ENCODE measurements at regions of chr11 and their contacts with region 1.

Region 1: DNA sequence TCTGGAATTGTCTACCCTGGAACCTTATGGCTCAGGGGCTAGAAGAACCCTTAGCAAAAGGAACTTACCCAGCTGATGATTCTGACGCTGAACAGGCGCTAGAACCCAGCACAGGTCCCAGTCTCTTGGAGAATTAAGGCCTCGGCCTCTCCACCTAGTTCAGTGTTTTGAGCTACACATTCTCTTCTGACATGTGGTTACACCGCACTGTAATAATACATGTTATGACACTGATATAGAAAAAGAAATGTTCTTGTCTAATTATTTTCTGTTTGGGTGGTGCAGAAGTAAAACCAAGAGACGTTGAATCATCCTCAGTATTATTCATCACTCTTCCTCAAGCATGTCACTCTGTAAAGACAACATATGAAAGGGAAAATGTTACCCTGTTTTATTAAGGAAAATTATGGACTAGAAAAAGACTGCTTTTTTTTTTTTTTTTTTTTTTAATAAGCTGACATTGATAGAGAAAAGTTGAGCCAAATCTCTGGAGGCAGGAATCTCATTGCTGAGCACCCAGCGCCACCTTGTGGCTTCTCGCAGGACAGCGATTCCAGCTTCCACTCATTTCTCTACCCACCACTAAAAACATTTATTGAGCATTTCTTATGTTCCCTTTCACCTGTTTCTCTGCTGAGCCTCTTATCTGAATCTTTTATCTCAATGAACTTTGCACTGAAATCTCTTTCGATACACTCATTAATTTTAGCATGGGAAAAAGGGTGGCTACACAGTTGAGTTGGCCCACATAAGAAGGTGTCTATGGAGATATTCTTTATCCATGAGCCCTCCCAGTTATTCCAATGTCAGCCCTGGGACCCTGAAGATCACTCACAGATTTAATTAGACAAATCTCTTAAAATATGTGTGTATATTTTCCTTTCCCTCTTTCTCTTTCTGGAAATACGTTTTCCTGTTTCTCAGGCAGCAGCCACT is 12.6 kb upstream of the APLNR start:
- DNase-seq: peak in 9 of 10 donors; percentile 28 to 79 (median 63)
- H3K4me3 ChIP-seq: no peak overlapping the region
- H3K27ac ChIP-seq: no peak overlapping the region
- H3K27me3 ChIP-seq: peaks cover 0 to 20% (median 7%) of the 10 kb centered on the region in 45 donors
- CTCF ChIP-seq: peak; percentile 57 to 97 (median 89)

Region 2: DNA sequence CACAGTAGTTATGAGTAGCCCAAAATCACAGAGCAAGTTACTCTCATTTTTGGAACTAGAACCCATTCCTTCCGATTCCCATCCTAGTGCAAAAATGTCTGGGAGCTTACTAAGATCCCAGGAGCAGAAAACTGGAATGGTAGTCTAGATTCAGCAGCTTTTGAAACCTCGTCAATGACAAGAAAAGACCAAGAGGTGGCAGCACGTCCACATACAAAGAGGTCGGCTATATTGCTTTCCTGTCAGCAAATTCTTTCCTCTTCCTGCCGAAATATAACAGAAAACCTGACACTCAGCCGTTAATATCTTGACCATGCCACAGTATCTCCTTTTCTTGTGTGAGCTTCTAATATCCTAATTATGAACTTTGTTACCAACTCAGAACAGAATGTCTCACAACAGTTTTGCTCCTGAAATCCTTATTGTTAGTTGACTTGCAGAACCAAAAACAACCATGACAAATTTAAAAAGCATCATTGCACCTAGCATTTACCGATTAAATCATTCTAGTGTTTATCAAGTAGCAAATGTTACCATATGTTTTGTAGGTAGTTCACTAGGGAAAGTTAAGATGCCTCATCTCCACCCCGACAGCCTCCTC is 408.3 kb before region 1 on chr11:
- intact Hi-C with region 1: loop called (anchors 1 to 5 kb)
- DNase-seq: peak in 6 of 10 donors; percentile 4 to 58 (median 42)
- H3K4me3 ChIP-seq: peak overlapping the region in 7 of 59 donors; percentile 7 to 42 (median 15)
- H3K27ac ChIP-seq: no peak overlapping the region
- H3K27me3 ChIP-seq: peaks cover 0 to 14% (median 0%) of the 10 kb centered on the region in 45 donors
- CTCF ChIP-seq: peak; percentile 34 to 90 (median 77)

Region 3: DNA sequence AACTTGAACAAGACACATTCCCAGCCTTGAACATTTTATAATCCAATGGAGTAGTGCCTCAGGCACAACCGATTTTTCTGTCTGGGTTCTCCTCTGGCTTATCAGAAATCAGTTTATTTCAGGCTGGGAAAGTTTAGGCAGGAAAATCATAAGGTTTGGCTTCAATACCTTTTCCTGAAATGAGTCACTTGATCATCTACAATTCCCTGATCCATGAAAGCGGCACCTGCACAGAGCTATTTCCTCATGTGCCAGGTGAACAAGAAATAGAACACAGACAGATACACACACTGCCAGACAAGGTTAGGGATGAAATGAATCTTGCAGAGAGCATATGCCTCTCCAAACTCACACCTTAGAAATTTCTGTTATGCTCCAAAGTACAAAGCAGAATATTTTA is 394.4 kb before region 1 on chr11:
- intact Hi-C with region 1: loop called in 1 of 2 experiments (anchors 5 kb)
- DNase-seq: no peak
- H3K4me3 ChIP-seq: no peak overlapping the region
- H3K27ac ChIP-seq: no peak overlapping the region
- H3K27me3 ChIP-seq: peaks cover 0 to 7% (median 0%) of the 10 kb centered on the region in 45 donors
- CTCF ChIP-seq: no peak

Region 4: GRCh38 chr11:57116654-57117053 is 133.0 kb before region 1 on chr11:
- intact Hi-C with region 1: loop called in 1 of 2 experiments (anchors 5 kb)
- DNase-seq: peak in 1 of 10 donors; percentile 21
- H3K4me3 ChIP-seq: no peak overlapping the region
- H3K27ac ChIP-seq: no peak overlapping the region
- H3K27me3 ChIP-seq: no peaks in the 10 kb centered on the region
- CTCF ChIP-seq: peak in 53 of 56 donors; percentile 12 to 67 (median 44)

Region 5: DNA sequence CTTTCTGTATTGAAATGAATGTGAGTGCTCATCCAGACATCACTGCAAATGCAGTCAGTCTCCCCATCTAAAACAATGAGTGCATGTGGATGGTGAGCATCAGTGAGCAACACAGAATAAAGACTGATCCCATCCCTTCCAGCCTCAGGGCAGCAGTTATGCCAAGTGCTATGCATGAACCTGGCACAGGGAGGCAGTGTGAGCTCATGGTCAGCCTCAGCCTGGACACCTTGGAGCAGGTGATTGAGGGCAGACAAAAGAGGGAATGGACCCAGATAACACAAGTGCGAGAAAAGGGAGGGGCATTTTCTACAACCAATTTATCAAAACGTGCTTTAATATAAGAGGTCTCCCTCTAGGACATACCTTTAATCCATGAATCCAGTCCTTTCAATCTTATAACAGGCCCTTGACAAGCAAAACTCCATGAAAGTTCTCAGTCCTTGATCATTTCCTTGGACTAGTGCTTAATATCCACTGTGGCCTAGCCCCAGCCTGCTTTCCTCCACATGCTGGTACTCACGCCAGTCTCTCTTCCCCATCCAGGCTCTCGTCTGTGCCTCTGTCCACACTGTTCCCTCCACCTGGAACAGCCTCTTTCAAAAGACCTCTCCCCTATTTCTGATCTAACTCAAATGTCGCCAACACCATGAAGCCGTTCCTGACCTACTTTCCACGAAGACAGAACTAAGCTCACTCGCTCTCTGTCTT is 118.4 kb before region 1 on chr11:
- intact Hi-C with region 1: loop called in 1 of 2 experiments (anchors 10 kb)
- DNase-seq: peak in 2 of 10 donors; percentile 15 to 36
- H3K4me3 ChIP-seq: no peak overlapping the region
- H3K27ac ChIP-seq: no peak overlapping the region
- H3K27me3 ChIP-seq: peaks cover 0 to 18% (median 0%) of the 10 kb centered on the region in 45 donors
- CTCF ChIP-seq: peak in 50 of 56 donors; percentile 9 to 70 (median 44)

Region 6: GRCh38 chr11:57213342-57214095 is 36.1 kb before region 1 on chr11:
- intact Hi-C with region 1: no loop called
- DNase-seq: no peak
- H3K4me3 ChIP-seq: no peak overlapping the region
- H3K27ac ChIP-seq: no peak overlapping the region
- H3K27me3 ChIP-seq: peaks cover 0 to 14% (median 0%) of the 10 kb centered on the region in 45 donors
- CTCF ChIP-seq: no peak